Posterior vena cava (tissue), 2 donors: ENCODE measurements at regions of chr5 and their contacts with region 1.

Region 1: GRCh38 chr5:135895551-135895950 is at the start of gene IL9:
- DNase-seq: no peak
- total RNA-seq, gene IL9: not detected

Region 2: GRCh38 chr5:134851307-134851923 is 1044.1 kb before region 1 on chr5:
- intact Hi-C with region 1: no loop called
- DNase-seq: no peak

Region 3: GRCh38 chr5:135864503-135865435 is 30.8 kb before region 1 on chr5:
- intact Hi-C with region 1: no loop called
- DNase-seq: no peak

Region 4: DNA sequence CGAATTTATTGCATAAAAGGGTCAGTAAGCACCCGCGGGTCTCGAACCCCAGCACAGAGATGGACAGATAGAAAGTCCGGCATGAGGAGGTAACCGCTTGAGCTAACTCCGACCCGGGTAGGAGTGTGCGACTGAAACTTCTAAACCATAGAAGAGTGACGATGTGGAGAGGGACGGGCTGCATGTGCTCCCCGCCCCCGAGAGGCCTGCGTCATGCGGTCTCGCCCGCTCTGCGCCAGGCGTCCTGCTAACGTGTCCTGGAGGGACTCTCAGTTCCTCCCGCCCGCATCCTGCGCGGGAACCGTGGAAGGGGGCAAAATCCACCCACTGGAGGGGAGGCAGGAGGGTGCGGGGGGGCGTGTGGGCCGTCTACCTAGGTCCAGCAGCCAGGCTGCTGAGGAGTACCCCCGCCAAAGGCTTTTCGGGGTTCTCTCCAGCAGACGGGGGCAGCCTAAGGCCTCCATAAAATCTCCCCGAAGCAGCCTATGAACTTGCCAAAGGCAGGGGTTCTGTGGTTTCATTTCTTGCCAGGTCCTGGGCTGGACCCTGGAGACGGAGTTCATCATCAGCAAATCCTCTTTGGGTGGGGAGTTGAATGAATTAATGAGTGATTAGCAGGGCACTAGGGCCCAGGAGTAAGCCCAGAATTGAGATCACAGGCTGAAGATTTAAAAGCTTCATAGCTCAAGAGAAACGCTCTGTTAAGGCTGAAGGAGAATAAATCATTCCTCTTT is 185.1 kb after region 1 on chr5:
- intact Hi-C with region 1: loop called in 1 of 2 experiments (anchors 5 kb)
- DNase-seq: peak; percentile 97

Region 5: GRCh38 chr5:137320056-137321045 is 1424.8 kb after region 1 on chr5:
- intact Hi-C with region 1: no loop called
- DNase-seq: no peak